Vagina (tissue), 2 donors: ENCODE measurements at regions of chr12 and their contacts with region 1.

Region 1: GRCh38 chr12:104276273-104277131 is 27.0 kb upstream of the EID3 start:
- DNase-seq: no peak
- H3K4me3 ChIP-seq: no peak overlapping the region
- H3K27ac ChIP-seq: no peak overlapping the region
- H3K4me1 ChIP-seq: no peaks in the 10 kb centered on the region
- H3K27me3 ChIP-seq: no peaks in the 10 kb centered on the region
- CTCF ChIP-seq: no peak
- POLR2A ChIP-seq: no peak

Region 2: GRCh38 chr12:103884316-103884715 is 392.2 kb before region 1 on chr12:
- intact Hi-C with region 1: loop called (anchors 5 kb)
- DNase-seq: no peak
- H3K4me3 ChIP-seq: no peak overlapping the region
- H3K27ac ChIP-seq: no peak overlapping the region
- H3K4me1 ChIP-seq: no peaks in the 10 kb centered on the region
- H3K27me3 ChIP-seq: no peaks in the 10 kb centered on the region
- CTCF ChIP-seq: no peak
- POLR2A ChIP-seq: no peak

Region 3: GRCh38 chr12:104632724-104633201 is 356.3 kb after region 1 on chr12:
- intact Hi-C with region 1: no loop called
- DNase-seq: no peak
- H3K4me3 ChIP-seq: no peak overlapping the region
- H3K27ac ChIP-seq: no peak overlapping the region
- H3K4me1 ChIP-seq: peaks cover 6% of the 10 kb centered on the region
- H3K27me3 ChIP-seq: no peaks in the 10 kb centered on the region
- CTCF ChIP-seq: no peak
- POLR2A ChIP-seq: no peak